Lower leg skin (tissue), 4 donors: ENCODE measurements at regions of chr3 and their contacts with region 1.

Region 1: GRCh38 chr3:105154699-105155098 is 212.0 kb upstream of the ALCAM start:
- DNase-seq: no peak
- H3K4me3 ChIP-seq: no peak overlapping the region
- CTCF ChIP-seq: no peak
- POLR2A ChIP-seq: no peak

Region 2: DNA sequence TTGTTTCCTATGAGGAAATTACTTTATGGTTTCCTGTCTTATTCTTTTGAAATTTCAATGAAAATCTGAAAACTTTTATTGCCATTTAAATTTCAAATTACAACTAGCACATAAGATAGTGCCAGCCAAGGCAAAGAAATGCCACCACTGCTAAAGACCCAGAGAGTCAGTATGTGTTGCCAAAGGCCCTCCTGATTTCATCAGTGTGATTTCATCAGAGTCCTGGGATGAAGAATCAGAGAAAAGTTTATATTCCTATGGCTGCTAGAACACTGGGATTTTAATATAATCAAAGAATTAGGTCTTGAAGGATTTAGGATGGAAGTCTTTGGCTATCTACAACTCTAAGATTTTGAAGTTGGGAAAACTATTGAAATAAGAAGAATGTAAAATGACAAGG is 1788.4 kb after region 1 on chr3:
- intact Hi-C with region 1: loop called (anchors 5 kb)
- DNase-seq: no peak
- H3K4me3 ChIP-seq: no peak overlapping the region
- CTCF ChIP-seq: no peak
- POLR2A ChIP-seq: no peak